ENCODE measurements at regions of chr5 and their contacts with region 1.

Region 1: DNA sequence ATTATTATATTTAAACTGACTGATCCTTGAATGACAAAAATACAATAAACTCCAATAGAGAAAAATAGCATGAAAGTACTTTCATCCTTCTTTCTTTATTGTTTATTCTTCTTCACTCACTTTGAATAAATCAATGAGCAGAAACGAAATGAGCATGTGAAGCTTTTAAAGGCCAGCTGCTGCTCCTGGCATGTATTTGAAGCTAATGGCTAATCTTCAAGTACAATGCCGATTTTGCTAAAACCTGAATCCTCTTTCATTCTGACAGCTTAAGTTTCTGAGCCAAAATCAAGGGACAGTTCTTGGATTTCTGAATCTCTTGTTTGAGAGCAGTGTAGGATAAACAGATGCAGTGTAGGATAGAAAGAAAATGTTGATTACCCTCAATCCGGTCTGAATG is 237.3 kb downstream of the CDH10 start:
- DNase-seq: no peak
- H3K4me3 ChIP-seq: no peak overlapping the region
- H3K27ac ChIP-seq: no peak overlapping the region
- H3K4me1 ChIP-seq: no peaks in the 10 kb centered on the region
- H3K27me3 ChIP-seq: no peaks in the 10 kb centered on the region
- CTCF ChIP-seq: no peak
- EP300 ChIP-seq: no peak
- POLR2A ChIP-seq: no peak

Region 2: DNA sequence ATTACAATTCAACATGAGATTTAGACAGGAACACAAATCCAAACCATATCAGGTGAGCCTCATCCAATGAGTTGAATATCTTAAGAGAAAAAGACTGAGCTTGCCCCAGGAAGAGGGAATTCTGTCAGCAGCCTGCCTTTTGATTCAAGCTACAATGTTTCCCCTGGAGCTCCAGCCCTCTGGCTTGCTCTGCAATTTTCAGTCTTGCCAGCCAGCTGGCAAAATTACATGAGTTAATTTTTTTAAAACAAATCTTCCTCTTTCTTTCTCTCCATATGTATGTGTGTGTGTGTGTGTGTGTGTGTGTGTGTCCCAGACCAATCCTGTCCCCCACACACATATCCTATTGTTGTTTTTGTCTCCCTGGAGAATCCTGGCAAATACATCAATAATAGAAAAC is 75.9 kb before region 1 on chr5:
- in situ Hi-C with region 1: no loop called
- intact Hi-C with region 1: loop called (anchors 2 kb)
- DNase-seq: no peak
- H3K4me3 ChIP-seq: no peak overlapping the region
- H3K27ac ChIP-seq: no peak overlapping the region
- H3K4me1 ChIP-seq: no peaks in the 10 kb centered on the region
- H3K27me3 ChIP-seq: no peaks in the 10 kb centered on the region
- CTCF ChIP-seq: no peak
- EP300 ChIP-seq: no peak
- POLR2A ChIP-seq: no peak

Region 3: GRCh38 chr5:24363789-24364481 is 43.5 kb before region 1 on chr5:
- in situ Hi-C with region 1: no loop called
- intact Hi-C with region 1: no loop called
- DNase-seq: no peak
- H3K4me3 ChIP-seq: no peak overlapping the region
- H3K27ac ChIP-seq: no peak overlapping the region
- H3K4me1 ChIP-seq: no peaks in the 10 kb centered on the region
- H3K27me3 ChIP-seq: no peaks in the 10 kb centered on the region
- CTCF ChIP-seq: no peak
- EP300 ChIP-seq: no peak
- POLR2A ChIP-seq: no peak

Measured in transverse colon (tissue), 4 donors.